Uterus (tissue), 4 donors: ENCODE measurements at regions of chr22 and their contacts with region 1.

Region 1: GRCh38 chr22:30386960-30387827 is at the start of gene RNF215:
- DNase-seq: peak; percentile 77 to 89
- H3K4me3 ChIP-seq: peak within 1 kb of the TSS; percentile 46 to 66
- H3K27ac ChIP-seq: peak within 1 kb of the TSS; percentile 83 to 86
- H3K4me1 ChIP-seq: peaks cover 0 to 4% of the 10 kb centered on the region in 2 donors
- H3K27me3 ChIP-seq: no peaks in the 10 kb centered on the region
- CTCF ChIP-seq: peak; percentile 95 to 97 (median 96)
- POLR2A ChIP-seq: peak in 1 of 2 donors; percentile 37
- total RNA-seq, gene RNF215: 8.2 to 25.9 (median 18.9) TPM

Region 2: DNA sequence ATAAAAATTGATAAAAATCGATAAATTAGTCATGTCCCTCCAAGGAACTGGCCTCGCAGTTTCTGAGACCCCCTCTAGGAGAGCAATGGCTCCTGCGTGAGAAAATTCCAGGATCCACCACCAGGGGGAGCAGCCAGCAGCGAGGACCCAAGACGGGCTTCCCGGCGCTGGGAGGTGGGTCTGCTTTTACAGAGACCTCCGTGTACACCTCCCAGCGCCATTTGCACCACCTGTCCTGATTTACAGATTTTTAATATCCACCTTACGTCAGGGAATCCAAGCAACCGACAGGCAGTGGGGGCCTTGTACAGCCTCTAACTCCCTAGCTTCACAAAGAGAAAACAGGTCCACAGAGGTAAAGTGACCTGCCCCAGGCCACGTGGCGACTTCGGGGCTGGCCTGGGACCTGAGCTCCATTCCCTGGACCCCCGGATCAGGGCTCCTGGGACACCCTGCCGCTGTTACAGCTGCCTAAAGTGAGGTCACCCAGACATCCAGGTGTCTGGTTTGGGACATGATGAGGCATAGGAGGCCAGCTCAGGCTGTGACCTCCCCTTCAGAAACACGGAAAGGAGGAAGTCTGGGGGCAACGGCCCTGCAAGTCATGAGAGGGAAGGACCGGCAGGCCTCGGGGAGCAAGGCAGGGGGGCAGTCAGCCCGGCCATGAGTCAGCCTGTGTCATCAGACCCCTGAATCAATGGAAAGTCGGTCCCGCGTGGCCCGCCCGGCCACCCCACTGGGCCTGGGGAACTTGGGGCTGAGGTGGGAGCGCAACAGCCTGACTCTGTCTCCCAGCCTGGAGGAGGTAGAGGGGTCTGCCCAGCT is 124.1 kb before region 1 on chr22:
- intact Hi-C with region 1: loop called (anchors 5 kb)
- DNase-seq: peak; percentile 74 to 78
- H3K4me3 ChIP-seq: no peak overlapping the region
- H3K27ac ChIP-seq: no peak overlapping the region
- H3K4me1 ChIP-seq: peaks cover 0 to 5% of the 10 kb centered on the region in 2 donors
- H3K27me3 ChIP-seq: no peaks in the 10 kb centered on the region
- CTCF ChIP-seq: peak; percentile 94 to 98 (median 94)
- POLR2A ChIP-seq: no peak

Region 3: DNA sequence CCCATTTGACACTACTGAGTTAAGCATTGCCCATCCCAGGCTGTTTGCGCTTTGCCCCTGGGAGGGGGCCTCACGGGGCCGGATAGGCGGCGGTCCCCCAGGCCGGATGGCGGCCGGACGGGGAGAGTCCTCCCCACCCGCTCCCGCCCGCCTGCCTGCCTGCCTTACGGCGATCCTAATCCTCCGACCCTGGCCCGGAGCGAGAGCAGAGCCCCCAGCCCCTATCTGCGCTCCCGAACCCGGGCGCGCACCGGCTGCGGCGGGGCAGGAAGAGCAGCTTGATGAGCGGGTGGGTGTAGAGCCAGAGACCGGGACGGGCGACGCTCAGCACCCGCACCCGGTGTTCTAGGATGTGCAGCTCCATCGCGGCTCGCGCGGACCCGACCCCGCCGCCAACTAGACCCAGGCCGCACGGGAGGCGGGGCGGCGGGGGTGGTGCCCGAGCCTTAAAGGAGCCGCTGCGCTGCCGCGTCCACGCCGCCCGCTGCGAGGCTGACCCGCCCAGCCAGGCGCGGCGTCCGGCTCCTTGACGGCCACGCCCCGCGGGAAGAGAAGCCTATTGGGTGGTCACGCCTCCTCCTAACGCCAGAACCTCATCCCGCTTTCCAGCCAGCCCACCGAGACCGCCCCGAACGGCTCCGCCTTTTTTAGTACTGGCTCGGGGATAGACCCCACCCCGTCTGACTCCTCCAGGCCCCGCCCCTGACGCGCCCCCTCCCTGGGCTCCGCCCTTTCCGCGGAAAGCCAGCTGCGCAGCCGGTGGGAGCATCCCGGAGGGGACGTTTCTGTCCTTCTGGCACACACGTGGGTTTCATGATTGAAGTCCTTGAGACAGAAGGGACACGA is 97.8 kb before region 1 on chr22 and contains the start of gene CASTOR1:
- intact Hi-C with region 1: loop called (anchors 5 kb)
- DNase-seq: peak; percentile 99
- H3K4me3 ChIP-seq: peak within 1 kb of the TSS; percentile 64 to 98
- H3K27ac ChIP-seq: peak within 1 kb of the TSS; percentile 89 to 95
- H3K4me1 ChIP-seq: peaks cover 13 to 23% of the 10 kb centered on the region in 2 donors
- H3K27me3 ChIP-seq: no peaks in the 10 kb centered on the region
- CTCF ChIP-seq: peak in 2 of 4 experiments; percentile 19 to 28
- POLR2A ChIP-seq: peak; percentile 79 to 88
- total RNA-seq, gene CASTOR1: 15.8 to 67.1 (median 27.7) TPM